ENCODE measurements at regions of chr15 and their contacts with region 1.

Region 1: DNA sequence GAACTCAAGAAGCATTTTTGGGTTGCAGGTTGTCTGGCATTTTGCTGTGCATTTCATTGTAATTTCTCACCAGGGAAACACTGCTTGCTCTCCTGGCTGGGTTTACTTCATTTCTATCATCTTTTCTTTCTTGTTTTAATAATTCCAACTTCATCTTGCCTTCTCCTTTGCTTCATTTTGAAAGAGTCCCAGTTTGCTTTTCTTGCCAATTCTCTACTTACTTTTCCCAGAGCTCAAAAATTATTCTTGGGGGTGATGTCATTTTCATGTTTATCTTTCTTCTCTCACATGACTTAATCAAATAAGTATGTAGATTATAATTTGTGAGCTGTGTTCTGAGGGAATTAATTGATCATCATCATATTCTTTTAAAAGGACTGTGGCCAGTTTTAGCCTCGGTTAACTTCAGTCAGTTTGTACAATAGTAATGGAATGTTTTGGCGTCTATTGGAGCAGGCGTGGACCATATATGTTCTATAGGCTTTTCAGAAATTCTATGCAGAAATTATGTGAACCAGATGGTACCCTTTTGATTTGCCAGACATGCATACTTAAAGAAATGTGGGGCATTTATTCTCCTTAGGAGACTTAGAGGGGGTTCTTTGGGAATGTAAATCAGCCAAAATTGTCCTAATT is 30.1 kb downstream of the SH3GL3 start:
- DNase-seq: no peak
- H3K4me3 ChIP-seq: no peak overlapping the region
- H3K27ac ChIP-seq: no peak overlapping the region
- H3K4me1 ChIP-seq: no peaks in the 10 kb centered on the region
- H3K27me3 ChIP-seq: no peaks in the 10 kb centered on the region
- CTCF ChIP-seq: no peak

Region 2: DNA sequence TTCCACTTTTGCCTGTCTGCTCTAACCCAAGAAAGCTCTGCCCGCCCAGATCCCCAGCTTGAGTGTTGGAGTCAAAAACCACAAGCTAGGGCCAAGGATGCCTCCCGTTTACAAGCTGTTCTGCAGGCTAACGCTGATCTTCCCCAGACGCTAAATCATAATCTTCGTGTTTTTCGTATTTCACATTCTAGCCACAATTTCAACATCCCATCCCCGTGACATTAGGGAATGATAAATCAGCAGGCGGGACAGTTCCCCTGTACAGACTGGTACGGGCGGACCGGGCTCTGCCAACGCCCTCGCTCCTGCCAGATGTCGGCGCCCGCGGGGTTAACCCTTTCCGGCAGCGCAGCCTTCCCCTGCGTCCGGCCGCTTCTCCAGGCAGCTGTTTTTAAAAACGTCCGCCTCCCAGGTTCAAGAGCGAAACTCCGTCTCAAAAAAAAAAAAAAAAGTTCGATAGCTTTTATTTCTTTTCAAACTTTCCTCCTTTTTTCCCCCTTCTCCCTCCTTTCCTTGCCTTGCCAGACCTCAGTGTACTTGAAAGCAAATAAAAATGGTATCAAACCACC is 111.8 kb before region 1 on chr15:
- CTCF ChIA-PET with region 1: interaction called, 18 read pairs
- POLR2A ChIA-PET with region 1: no interaction called
- intact Hi-C with region 1: no loop called
- DNase-seq: peak in 1 of 2 experiments; percentile 21
- H3K4me3 ChIP-seq: peak overlapping the region; percentile 52
- H3K27ac ChIP-seq: no peak overlapping the region
- H3K4me1 ChIP-seq: peaks cover 20% of the 10 kb centered on the region; the same call in 1 of the 2 replicates
- H3K27me3 ChIP-seq: no peaks in the 10 kb centered on the region
- CTCF ChIP-seq: no peak

Region 3: GRCh38 chr15:83747050-83747717 is 269.9 kb after region 1 on chr15:
- CTCF ChIA-PET with region 1: no interaction called
- POLR2A ChIA-PET with region 1: no interaction called
- intact Hi-C with region 1: no loop called
- DNase-seq: peak in 1 of 2 experiments; percentile 27
- H3K4me3 ChIP-seq: no peak overlapping the region
- H3K27ac ChIP-seq: no peak overlapping the region
- H3K4me1 ChIP-seq: peaks cover 5% of the 10 kb centered on the region; the same call in 1 of the 2 replicates
- H3K27me3 ChIP-seq: no peaks in the 10 kb centered on the region
- CTCF ChIP-seq: peak; percentile 51